OCI-LY7 (cell line): ENCODE measurements at regions of chr4 and their contacts with region 1.

Region 1: DNA sequence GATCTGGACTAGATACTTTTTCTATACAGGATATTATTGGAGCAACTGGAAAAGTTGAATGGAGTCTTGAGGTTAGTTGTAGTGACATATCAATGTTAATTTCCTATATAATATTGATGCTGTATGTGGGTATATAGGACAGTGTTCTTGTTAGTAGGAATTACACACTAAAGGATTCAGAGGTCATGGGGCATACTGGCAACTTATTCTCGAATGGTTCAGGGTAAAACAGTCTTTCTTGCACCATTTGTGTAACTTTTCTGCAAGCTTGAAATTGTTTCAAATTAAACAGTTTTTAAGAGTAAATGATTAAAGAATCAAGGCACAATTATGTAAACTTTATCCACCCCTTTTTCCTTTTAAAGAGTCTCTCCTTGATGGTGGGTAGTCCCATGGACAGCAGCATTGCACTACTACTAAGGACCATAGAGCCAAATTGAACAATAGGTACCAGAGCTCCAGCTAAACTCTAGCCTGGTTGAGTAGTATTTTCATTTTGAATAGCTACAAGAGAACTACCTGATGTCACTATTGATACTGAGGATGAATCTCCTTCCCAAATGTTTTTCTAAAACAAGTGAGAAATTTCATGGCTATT is 70.1 kb downstream of the DMP1 start:
- DNase-seq: no peak
- H3K4me3 ChIP-seq: no peak overlapping the region
- H3K27ac ChIP-seq: no peak overlapping the region
- H3K4me1 ChIP-seq: no peaks in the 10 kb centered on the region
- CTCF ChIP-seq: no peak

Region 2: GRCh38 chr4:87704001-87704400 is 16.2 kb before region 1 on chr4:
- CTCF ChIA-PET with region 1: no interaction called
- POLR2A ChIA-PET with region 1: no interaction called
- intact Hi-C with region 1: loop called (anchors 2 kb)
- DNase-seq: no peak
- H3K4me3 ChIP-seq: no peak overlapping the region
- H3K27ac ChIP-seq: no peak overlapping the region
- H3K4me1 ChIP-seq: no peaks in the 10 kb centered on the region
- CTCF ChIP-seq: no peak

Region 3: DNA sequence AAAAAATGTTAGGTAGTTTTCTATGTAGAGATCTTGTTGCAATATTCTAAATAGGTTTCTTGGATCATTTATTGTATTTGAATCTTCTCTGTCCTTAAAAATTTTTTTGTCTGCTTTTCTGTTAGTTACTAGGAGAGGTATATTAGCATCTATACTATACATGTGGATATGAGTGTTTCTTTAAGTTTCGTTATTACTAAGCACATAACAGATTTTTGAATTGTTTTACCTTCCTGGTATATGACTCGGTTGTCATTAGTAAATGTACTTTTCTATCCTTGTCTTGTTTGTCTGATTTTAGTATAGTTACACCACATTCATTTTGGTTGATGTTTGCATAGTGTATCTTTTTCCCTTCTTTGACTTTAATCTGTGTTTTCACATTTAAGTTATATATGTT is 783.2 kb after region 1 on chr4:
- CTCF ChIA-PET with region 1: no interaction called
- POLR2A ChIA-PET with region 1: no interaction called
- intact Hi-C with region 1: no loop called
- DNase-seq: no peak
- H3K4me3 ChIP-seq: no peak overlapping the region
- H3K27ac ChIP-seq: no peak overlapping the region
- H3K4me1 ChIP-seq: no peaks in the 10 kb centered on the region
- CTCF ChIP-seq: no peak